Right ventricle myocardium inferior (tissue), 1 donor: ENCODE measurements at regions of chr22 and their contacts with region 1.

Region 1: DNA sequence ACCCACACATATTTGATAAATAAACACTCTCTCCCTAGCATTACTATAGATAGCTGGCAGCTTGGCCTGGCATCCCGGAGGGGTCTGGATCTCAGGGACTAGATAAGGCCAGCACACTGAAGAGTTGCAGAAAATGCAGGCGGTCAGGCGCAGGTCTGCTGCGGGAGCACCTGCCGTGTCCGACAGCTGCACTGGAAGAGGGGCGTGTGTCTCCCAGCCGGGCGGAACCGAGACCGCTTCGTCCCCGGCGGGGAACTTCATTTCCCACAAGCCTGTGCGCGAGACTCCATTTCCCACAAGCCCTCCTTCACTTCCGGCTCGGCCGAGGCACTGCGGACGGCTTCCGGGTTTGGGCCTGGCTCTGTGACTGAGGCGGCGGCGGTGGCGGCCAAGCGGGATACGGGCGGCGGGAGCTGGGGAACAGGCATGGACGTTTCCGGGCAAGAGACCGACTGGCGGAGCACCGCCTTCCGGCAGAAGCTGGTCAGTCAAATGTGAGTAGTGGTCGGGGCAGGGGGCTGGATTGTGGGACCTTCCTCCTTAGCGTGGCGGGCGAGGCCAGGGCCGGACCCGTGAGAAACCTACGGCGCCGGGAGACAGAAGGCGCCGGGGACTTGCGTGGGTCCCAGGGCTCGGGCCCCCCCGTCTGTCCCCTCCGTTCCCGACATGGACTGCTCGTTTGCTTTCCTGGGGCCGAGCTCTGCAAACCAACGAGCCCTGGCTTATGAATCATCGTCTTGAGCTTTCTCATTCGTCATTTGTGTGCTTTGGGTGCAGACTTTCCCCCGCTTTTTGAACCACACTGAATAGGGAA is at the start of gene MED15:
- DNase-seq: peak; percentile 97
- ATAC-seq: peak; percentile 94
- total RNA-seq, gene MED15: 38.1 TPM

Region 2: GRCh38 chr22:20463324-20464095 is 44.0 kb before region 1 on chr22:
- intact Hi-C with region 1: no loop called
- DNase-seq: no peak
- ATAC-seq: peak; percentile 17

Region 3: GRCh38 chr22:20526628-20527355 is 19.3 kb after region 1 on chr22:
- intact Hi-C with region 1: loop called (anchors 2 kb)
- DNase-seq: no peak
- ATAC-seq: no peak

Region 4: GRCh38 chr22:20550821-20551744 is 43.6 kb after region 1 on chr22:
- intact Hi-C with region 1: loop called (anchors 5 kb)
- DNase-seq: no peak
- ATAC-seq: peak; percentile 23